ENCODE measurements at regions of chr22 and their contacts with region 1.

Region 1: DNA sequence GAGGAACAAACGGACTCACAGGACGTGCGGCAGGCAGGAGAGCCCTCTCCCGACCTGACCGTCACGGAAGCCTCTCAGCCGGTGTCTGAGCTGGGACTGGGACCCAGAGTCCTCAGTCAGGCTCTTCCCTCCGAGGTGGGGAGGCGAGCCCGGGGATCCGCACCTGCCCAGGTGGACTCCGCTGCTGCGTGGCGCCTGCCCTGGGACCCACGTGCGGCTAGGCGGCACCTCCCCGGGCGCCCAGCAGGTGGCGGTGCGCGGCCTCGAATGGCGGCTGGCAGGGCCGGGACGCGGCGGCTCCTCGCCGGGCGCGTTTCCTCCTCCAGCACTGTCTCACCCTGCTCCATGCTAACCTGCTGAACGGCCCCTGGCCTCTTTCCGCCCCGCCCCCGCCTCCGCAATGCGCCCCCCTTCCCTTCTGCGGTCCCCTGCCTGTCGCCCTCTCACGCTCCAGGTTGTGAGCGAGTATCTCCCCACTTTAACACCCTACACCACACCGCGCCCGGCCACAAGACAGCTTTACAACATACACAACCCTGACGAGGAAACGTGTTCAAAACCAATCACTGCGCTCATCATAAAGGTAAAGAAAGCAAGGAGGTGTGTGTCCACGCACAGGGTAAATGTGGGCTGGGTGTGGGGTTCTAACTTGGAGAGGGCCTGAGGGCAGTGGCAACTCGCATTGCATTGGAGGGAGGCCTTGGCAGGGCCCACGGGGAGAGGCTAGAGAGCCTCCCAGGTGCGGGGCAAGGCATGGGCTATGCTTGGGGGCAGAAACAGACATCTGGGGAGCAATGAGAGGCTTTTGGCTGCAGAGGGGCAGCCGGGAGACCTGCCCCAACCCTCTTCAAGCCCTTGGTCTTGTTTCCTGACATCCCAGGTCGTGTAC is 25.9 kb upstream of the ATXN10 start:
- DNase-seq: peak; percentile 80
- ATAC-seq: peak; percentile 97
- H3K4me3 Mint-ChIP-seq: no peak overlapping the region
- H3K27ac Mint-ChIP-seq: no peak overlapping the region
- H3K4me1 Mint-ChIP-seq: peaks cover 2% of the 10 kb centered on the region
- H3K27me3 Mint-ChIP-seq: peaks cover 46% of the 10 kb centered on the region
- CTCF ChIP-seq: peak; percentile 44

Region 2: DNA sequence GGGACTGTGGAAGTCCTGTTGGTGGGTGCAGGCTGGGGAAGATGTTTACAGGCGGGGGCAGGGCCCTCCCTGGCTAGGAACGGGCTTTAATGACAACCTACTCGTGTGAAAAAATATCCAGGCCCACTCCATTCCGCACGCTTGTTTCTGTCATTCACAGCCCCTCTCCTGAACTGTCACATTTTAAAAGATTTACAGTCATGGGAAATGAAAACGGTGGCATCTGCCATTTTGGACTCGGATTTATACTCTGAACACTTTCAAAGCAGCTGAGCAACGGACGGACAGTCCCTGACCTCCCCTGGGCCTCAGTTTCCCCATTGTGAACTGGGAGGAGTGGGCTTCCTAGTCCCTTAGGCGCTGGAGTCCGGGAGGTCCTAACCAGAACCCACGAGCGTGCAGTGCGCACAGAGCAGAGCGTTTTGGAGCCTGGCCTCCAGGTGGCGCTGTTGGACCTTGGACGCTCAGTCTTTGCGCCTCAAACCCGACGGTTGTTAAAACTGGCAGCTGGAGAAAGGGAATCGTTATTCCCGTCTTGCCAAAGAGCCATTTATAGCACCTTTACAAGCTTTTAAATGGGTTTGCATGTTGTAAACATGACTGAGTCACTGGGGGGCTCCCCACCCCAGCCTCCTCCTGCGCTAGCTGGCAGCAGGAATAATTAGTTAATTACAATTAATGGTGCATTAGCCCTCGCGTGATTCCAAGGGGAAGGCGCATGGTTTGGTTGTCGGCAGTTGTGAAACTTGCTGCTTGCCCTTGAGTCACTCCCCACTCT is 67.8 kb before region 1 on chr22:
- CTCF ChIA-PET with region 1: interaction called, 5 read pairs
- POLR2A ChIA-PET with region 1: no interaction called
- intact Hi-C with region 1: loop called (anchors 2 kb)
- DNase-seq: peak; percentile 64
- ATAC-seq: peak; percentile 71
- H3K4me3 Mint-ChIP-seq: no peak overlapping the region
- H3K27ac Mint-ChIP-seq: no peak overlapping the region
- H3K4me1 Mint-ChIP-seq: peaks cover 4% of the 10 kb centered on the region
- H3K27me3 Mint-ChIP-seq: peaks cover 17% of the 10 kb centered on the region
- CTCF ChIP-seq: peak; percentile 45

Region 3: GRCh38 chr22:45717789-45718188 is 72.0 kb after region 1 on chr22:
- CTCF ChIA-PET with region 1: no interaction called
- POLR2A ChIA-PET with region 1: no interaction called
- intact Hi-C with region 1: no loop called
- DNase-seq: no peak
- ATAC-seq: no peak
- H3K4me3 Mint-ChIP-seq: no peak overlapping the region
- H3K27ac Mint-ChIP-seq: no peak overlapping the region
- H3K4me1 Mint-ChIP-seq: no peaks in the 10 kb centered on the region
- H3K27me3 Mint-ChIP-seq: no peaks in the 10 kb centered on the region
- CTCF ChIP-seq: no peak

Region 4: GRCh38 chr22:45831394-45831793 is 185.6 kb after region 1 on chr22:
- CTCF ChIA-PET with region 1: no interaction called
- POLR2A ChIA-PET with region 1: no interaction called
- intact Hi-C with region 1: loop called (anchors 1 kb)
- DNase-seq: no peak
- ATAC-seq: no peak
- H3K4me3 Mint-ChIP-seq: no peak overlapping the region
- H3K27ac Mint-ChIP-seq: no peak overlapping the region
- H3K4me1 Mint-ChIP-seq: peaks cover 13% of the 10 kb centered on the region
- H3K27me3 Mint-ChIP-seq: no peaks in the 10 kb centered on the region
- CTCF ChIP-seq: no peak

Region 5: DNA sequence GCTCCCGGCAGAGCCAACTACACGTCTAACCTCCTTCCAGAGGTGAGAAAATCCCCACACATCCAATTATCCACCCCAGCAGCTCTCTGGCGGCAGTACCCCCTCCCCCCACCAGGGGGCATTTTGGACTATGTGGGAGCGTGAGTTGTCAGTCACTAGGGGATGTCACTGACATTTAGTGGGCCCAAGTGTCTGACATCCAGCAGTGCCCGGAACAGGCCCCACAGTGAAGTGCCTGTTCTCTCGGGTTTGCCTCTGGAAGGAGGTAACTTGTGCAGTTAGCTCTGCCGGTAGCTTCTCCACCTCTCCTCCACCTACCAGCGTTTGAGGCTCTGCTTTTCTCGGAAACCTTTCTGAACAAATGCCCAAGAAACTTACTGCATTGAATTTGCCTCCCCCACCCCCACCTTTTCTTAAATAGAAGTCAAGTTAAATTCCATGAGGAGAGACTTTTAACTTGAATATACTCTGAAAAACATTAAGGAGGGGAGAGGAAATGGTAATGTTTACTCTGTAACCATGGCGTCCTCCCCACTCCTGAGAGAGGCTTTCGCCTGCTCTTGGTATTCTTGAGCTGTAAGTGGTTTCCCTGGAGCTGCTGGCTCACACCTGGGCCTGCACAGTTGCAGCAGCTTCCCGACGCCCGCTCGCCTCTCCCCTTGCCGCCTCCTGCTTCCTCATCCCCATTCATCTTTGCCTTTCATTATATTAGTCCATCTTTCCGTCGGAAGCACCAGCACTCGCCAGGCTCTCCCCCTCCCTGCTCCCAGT is 218.4 kb after region 1 on chr22:
- CTCF ChIA-PET with region 1: interaction called, 4 read pairs
- POLR2A ChIA-PET with region 1: no interaction called
- intact Hi-C with region 1: loop called (anchors 1 kb)
- DNase-seq: peak; percentile 74
- ATAC-seq: peak; percentile 91
- H3K4me3 Mint-ChIP-seq: no peak overlapping the region
- H3K27ac Mint-ChIP-seq: no peak overlapping the region
- H3K4me1 Mint-ChIP-seq: peaks cover 4% of the 10 kb centered on the region
- H3K27me3 Mint-ChIP-seq: peaks cover 37% of the 10 kb centered on the region
- CTCF ChIP-seq: peak; percentile 89